Activated CD8-positive, alpha-beta T cell treated with anti-CD3 and anti-CD28 coated beads for 36 hours (primary cell): ENCODE measurements at regions of chr6 and their contacts with region 1.

Region 1: DNA sequence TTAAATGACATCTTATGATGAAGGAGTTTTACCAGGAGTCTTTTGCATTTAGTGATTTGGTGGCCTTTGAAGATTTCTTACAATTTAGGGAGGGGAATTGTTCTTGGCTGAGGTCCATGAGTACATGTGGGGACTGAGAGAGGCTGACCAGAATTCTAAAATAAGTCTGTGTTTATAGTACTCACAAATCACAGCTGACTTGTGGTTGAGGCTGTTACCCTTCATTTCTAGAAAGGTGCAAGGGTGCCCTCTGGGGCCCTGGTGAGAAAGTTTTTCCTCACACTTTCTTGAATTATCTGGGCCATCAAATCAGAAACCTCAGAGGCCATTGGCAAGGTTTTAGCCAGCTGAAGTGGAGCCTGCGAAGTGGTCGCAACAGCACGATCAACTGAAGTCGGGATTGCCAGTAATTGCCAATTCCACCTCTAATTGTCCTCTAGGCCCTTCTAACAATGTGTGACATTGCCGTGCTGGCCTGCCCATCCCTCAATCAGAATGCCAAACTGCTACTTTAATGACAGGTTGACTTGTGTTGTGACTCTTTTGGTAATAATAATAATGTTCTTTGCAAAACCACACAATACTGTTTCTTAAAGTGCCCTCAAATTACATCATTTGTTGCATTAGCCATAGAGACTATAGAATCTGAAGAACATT is 221.6 kb downstream of the OGFRL1 start:
- DNase-seq: peak; percentile 3
- ATAC-seq: no peak
- H3K4me3 Mint-ChIP-seq: no peak overlapping the region
- H3K27ac Mint-ChIP-seq: no peak overlapping the region
- H3K4me1 Mint-ChIP-seq: no peaks in the 10 kb centered on the region
- H3K27me3 Mint-ChIP-seq: no peaks in the 10 kb centered on the region
- CTCF ChIP-seq: no peak

Region 2: GRCh38 chr6:71383901-71384489 is 126.2 kb before region 1 on chr6:
- CTCF ChIA-PET with region 1: no interaction called
- POLR2A ChIA-PET with region 1: no interaction called
- intact Hi-C with region 1: loop called (anchors 10 kb)
- DNase-seq: peak; percentile 12
- ATAC-seq: no peak
- H3K4me3 Mint-ChIP-seq: no peak overlapping the region
- H3K27ac Mint-ChIP-seq: no peak overlapping the region
- H3K4me1 Mint-ChIP-seq: no peaks in the 10 kb centered on the region
- H3K27me3 Mint-ChIP-seq: no peaks in the 10 kb centered on the region
- CTCF ChIP-seq: peak; percentile 57

Region 3: GRCh38 chr6:71478834-71479541 is 31.2 kb before region 1 on chr6:
- CTCF ChIA-PET with region 1: no interaction called
- POLR2A ChIA-PET with region 1: no interaction called
- intact Hi-C with region 1: no loop called
- DNase-seq: no peak
- ATAC-seq: no peak
- H3K4me3 Mint-ChIP-seq: no peak overlapping the region
- H3K27ac Mint-ChIP-seq: no peak overlapping the region
- H3K4me1 Mint-ChIP-seq: no peaks in the 10 kb centered on the region
- H3K27me3 Mint-ChIP-seq: peaks cover under 1% of the 10 kb centered on the region
- CTCF ChIP-seq: no peak